Activated naive CD4-positive, alpha-beta T cell treated with anti-CD3 and anti-CD28 coated beads for 36 hours (primary cell): ENCODE measurements at regions of chr4 and their contacts with region 1.

Region 1: GRCh38 chr4:26964512-26964911 is 103.9 kb downstream of the STIM2 start:
- DNase-seq: no peak
- H3K4me3 Mint-ChIP-seq: no peak overlapping the region
- H3K27ac Mint-ChIP-seq: no peak overlapping the region
- H3K4me1 Mint-ChIP-seq: peaks cover 46% of the 10 kb centered on the region
- H3K27me3 Mint-ChIP-seq: no peaks in the 10 kb centered on the region

Region 2: GRCh38 chr4:26867914-26868684 is 96.4 kb before region 1 on chr4:
- CTCF ChIA-PET with region 1: no interaction called
- intact Hi-C with region 1: loop called (anchors 1 kb)
- DNase-seq: no peak
- H3K4me3 Mint-ChIP-seq: peak overlapping the region; percentile 33
- H3K27ac Mint-ChIP-seq: peak overlapping the region; percentile 19
- H3K4me1 Mint-ChIP-seq: peaks cover 76% of the 10 kb centered on the region
- H3K27me3 Mint-ChIP-seq: no peaks in the 10 kb centered on the region

Region 3: GRCh38 chr4:26878794-26879391 is 85.6 kb before region 1 on chr4:
- CTCF ChIA-PET with region 1: no interaction called
- intact Hi-C with region 1: loop called (anchors 1 kb)
- DNase-seq: no peak
- H3K4me3 Mint-ChIP-seq: peak overlapping the region; percentile 63
- H3K27ac Mint-ChIP-seq: peak overlapping the region; percentile 99
- H3K4me1 Mint-ChIP-seq: peaks cover 80% of the 10 kb centered on the region
- H3K27me3 Mint-ChIP-seq: no peaks in the 10 kb centered on the region

Region 4: DNA sequence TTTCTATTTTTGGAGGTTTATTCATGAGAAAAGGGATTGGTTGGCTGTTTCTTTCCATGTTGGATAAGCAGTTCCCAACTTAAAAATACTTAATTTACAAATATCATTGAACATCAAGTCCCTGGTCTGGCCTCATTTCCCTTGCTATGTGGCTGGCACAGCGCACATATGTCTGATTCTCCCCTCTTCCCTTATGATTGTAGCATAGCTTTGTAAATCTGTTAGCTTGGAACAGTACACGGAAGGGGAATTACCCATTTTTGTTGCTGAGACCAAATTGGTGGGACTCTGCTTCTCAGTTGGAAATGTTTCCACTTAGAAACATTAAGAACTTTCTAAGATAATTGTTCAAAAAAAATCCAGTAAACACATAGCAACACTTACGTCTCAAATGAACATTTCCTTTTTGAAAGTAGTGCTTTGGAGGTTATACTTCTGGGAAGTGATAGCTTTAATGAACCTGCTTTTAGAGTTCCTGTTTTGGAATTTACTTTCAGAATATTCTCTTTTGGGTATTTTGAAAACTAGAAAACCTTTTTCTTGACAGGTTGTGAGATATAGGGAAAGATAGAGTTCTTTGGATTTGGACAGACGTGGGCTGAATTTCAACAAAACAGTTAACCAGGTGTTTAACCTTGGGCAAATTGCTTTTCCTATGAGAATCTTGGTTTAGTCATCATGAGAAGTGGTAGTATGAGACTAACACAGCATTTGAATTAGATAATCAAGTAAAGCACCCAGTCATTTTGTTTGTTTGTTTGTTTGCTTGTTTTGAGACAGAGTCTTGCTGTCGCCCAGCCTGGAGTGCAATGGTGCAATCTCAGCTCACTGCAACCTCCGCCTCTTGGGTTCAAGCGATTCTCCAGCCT is 56.5 kb before region 1 on chr4:
- CTCF ChIA-PET with region 1: no interaction called
- intact Hi-C with region 1: loop called (anchors 1 kb)
- DNase-seq: peak; percentile 23
- H3K4me3 Mint-ChIP-seq: peak overlapping the region; percentile 8
- H3K27ac Mint-ChIP-seq: peak overlapping the region; percentile 74
- H3K4me1 Mint-ChIP-seq: peaks cover 73% of the 10 kb centered on the region
- H3K27me3 Mint-ChIP-seq: no peaks in the 10 kb centered on the region

Region 5: GRCh38 chr4:26992657-26993361 is 28.3 kb after region 1 on chr4:
- CTCF ChIA-PET with region 1: no interaction called
- intact Hi-C with region 1: loop called (anchors 5 kb)
- DNase-seq: peak; percentile 47
- H3K4me3 Mint-ChIP-seq: no peak overlapping the region
- H3K27ac Mint-ChIP-seq: no peak overlapping the region
- H3K4me1 Mint-ChIP-seq: peaks cover 26% of the 10 kb centered on the region
- H3K27me3 Mint-ChIP-seq: no peaks in the 10 kb centered on the region

Region 6: GRCh38 chr4:27270435-27270834 is 305.9 kb after region 1 on chr4:
- CTCF ChIA-PET with region 1: no interaction called
- intact Hi-C with region 1: no loop called
- DNase-seq: no peak
- H3K4me3 Mint-ChIP-seq: no peak overlapping the region
- H3K27ac Mint-ChIP-seq: no peak overlapping the region
- H3K4me1 Mint-ChIP-seq: no peaks in the 10 kb centered on the region
- H3K27me3 Mint-ChIP-seq: no peaks in the 10 kb centered on the region